Activated naive CD4-positive, alpha-beta T cell treated with anti-CD3 and anti-CD28 coated beads for 36 hours (primary cell): ENCODE measurements at regions of chr16 and their contacts with region 1.

Region 1: DNA sequence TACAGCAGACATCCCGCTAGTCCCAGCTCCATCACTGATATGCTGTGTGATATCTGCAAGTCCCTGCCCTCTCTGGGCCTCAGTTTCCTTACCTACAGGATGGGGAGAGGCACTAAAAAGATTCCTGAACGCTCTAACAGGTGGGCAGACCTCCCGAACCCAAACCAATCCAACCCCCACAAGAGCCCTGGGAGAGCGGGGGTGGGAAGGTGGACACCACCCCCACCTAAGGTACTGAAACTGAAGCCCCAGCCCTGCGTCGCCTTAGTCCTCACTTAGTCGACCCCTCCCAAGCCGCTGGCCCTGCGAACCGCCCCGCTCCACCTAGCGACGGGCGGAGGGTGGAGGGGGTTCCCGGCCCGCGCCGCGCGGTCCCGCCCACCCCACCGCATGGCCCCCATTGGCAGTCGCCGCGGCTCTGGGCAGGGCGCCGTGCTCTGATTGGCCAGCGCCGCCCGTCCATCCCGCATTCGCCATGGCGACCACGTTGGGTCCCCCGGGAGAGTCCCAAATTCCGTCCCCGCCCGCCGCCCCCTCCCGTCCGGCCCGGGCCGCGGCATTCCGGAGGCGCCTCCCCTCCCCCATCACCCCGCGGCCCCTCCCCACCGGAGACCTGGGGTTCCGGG is 578 bp downstream of the CCDC102A start:
- DNase-seq: peak; percentile 97
- H3K4me3 Mint-ChIP-seq: peak overlapping the region; percentile 85
- H3K27ac Mint-ChIP-seq: peak overlapping the region; percentile 88
- H3K4me1 Mint-ChIP-seq: peaks cover 70% of the 10 kb centered on the region
- H3K27me3 Mint-ChIP-seq: no peaks in the 10 kb centered on the region

Region 2: DNA sequence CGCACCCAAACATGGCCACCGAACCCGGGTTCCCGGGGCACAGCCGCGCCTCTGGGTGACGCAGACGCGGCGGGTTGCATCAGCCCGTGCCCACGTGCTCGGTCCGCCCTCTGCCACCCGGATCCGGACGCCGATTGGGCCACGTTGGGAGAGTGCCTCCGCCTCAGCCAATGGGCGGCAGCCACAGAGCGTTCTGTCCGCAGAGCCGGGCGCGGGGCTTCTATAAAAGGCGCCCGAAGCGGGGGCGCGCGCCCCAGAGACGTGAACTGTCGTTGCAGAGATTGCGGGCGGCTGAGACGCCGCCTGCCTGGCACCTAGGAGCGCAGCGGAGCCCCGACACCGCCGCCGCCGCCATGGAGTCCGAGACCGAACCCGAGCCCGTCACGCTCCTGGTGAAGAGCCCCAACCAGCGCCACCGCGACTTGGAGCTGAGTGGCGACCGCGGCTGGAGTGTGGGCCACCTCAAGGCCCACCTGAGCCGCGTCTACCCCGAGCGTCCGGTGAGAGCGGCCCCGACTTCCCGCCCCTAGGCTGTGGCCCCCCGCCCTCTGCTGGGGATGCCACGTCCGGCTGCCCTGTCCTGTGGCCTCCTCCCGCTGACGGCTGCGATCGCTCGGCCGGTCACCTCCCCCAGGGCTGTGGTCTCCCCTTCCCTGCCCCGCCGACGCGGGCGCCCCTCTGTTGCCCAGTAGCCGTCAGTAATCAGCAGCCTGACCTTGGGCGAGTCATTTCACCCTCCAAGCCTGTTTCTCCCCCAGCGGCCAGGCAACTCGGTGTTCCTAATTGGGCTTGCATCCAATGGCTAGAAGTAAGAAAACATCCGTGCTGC is 603.7 kb before region 1 on chr16 and contains the start of gene HERPUD1:
- CTCF ChIA-PET with region 1: no interaction called
- intact Hi-C with region 1: loop called (anchors 10 kb)
- DNase-seq: peak; percentile 99
- H3K4me3 Mint-ChIP-seq: peak within 1 kb of the TSS; percentile 98
- H3K27ac Mint-ChIP-seq: peak within 1 kb of the TSS; percentile 98
- H3K4me1 Mint-ChIP-seq: peaks cover 40% of the 10 kb centered on the region
- H3K27me3 Mint-ChIP-seq: no peaks in the 10 kb centered on the region
- total RNA-seq, gene HERPUD1: 118 to 120 TPM

Region 3: DNA sequence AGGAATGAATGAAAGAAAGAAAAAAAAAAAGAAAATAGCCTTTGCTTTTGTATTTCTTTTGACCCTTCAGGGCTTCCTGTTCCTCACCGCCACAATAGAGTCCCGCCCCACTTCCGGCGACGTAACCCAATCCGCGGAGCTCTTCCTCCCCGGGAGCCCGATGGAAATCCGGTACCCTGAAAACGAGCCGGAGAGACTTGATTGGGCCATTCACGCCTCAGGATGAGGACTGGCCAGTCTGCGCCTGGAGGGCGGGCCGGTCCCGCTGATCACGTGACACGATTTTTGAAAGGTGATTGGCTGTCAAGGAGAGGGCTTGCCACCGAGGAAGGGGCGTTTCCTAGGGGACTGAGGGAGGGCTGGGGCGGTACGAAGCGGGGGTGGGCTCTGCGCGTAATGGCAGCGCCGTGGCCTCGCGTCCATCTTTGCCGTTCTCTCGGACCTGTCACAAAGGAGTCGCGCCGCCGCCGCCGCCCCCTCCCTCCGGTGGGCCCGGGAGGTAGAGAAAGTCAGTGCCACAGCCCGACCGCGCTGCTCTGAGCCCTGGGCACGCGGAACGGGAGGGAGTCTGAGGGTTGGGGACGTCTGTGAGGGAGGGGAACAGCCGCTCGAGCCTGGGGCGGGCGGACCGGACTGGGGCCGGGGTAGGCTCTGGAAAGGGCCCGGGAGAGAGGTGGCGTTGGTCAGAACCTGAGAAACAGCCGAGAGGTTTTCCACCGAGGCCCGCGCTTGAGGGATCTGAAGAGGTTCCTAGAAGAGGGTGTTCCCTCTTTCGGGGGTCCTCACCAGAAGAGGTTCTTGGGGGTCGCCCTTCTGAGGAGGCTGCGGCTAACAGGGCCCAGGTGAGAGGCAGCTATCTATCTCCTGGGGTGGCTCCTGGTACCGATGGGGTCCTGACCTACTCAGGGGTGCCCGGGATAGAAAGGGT is 349.6 kb before region 1 on chr16 and contains the starts of genes PSME3IP1 and RSPRY1:
- CTCF ChIA-PET with region 1: no interaction called
- intact Hi-C with region 1: loop called (anchors 1 kb)
- DNase-seq: peak; percentile 100
- H3K4me3 Mint-ChIP-seq: peak within 1 kb of the TSS; percentile 97
- H3K27ac Mint-ChIP-seq: peak within 1 kb of the TSS; percentile 95
- H3K4me1 Mint-ChIP-seq: peaks cover 52% of the 10 kb centered on the region
- H3K27me3 Mint-ChIP-seq: no peaks in the 10 kb centered on the region
- total RNA-seq, gene PSME3IP1: 106 to 110 TPM
- total RNA-seq, gene RSPRY1: 25.7 to 28.7 TPM

Region 4: GRCh38 chr16:57462209-57462977 is 73.4 kb before region 1 on chr16 and contains the start of gene POLR2C:
- CTCF ChIA-PET with region 1: interaction called, 3 read pairs
- intact Hi-C with region 1: loop called (anchors 1 kb)
- DNase-seq: peak; percentile 95
- H3K4me3 Mint-ChIP-seq: peak within 1 kb of the TSS; percentile 100
- H3K27ac Mint-ChIP-seq: peak within 1 kb of the TSS; percentile 99
- H3K4me1 Mint-ChIP-seq: peaks cover 30% of the 10 kb centered on the region
- H3K27me3 Mint-ChIP-seq: no peaks in the 10 kb centered on the region
- total RNA-seq, gene POLR2C: 49.4 to 53.0 TPM

Region 5: GRCh38 chr16:57576429-57576870 is 40.7 kb after region 1 on chr16:
- CTCF ChIA-PET with region 1: interaction called, 9 read pairs
- intact Hi-C with region 1: loop called (anchors 1 kb)
- DNase-seq: peak; percentile 94
- H3K4me3 Mint-ChIP-seq: no peak overlapping the region
- H3K27ac Mint-ChIP-seq: no peak overlapping the region
- H3K4me1 Mint-ChIP-seq: peaks cover 9% of the 10 kb centered on the region
- H3K27me3 Mint-ChIP-seq: peaks cover 3% of the 10 kb centered on the region

Region 6: GRCh38 chr16:57734925-57735754 is 199.3 kb after region 1 on chr16:
- CTCF ChIA-PET with region 1: no interaction called
- intact Hi-C with region 1: loop called (anchors 1 kb)
- DNase-seq: peak; percentile 98
- H3K4me3 Mint-ChIP-seq: peak overlapping the region; percentile 91
- H3K27ac Mint-ChIP-seq: peak overlapping the region; percentile 96
- H3K4me1 Mint-ChIP-seq: peaks cover 19% of the 10 kb centered on the region
- H3K27me3 Mint-ChIP-seq: no peaks in the 10 kb centered on the region